B cell (primary cell): ENCODE measurements at regions of chr11 and their contacts with region 1.

Region 1: GRCh38 chr11:64846998-64847666 is 2.7 kb upstream of the CDC42BPG start:
- DNase-seq: peak; percentile 92
- ATAC-seq: peak; percentile 20
- H3K4me3 ChIP-seq: no peak overlapping the region
- H3K4me3 Mint-ChIP-seq: peak overlapping the region; percentile 63
- H3K27ac ChIP-seq: peak overlapping the region in 1 of 2 donors; percentile 25
- H3K27ac Mint-ChIP-seq: peak overlapping the region; percentile 75
- H3K4me1 ChIP-seq: peaks cover 53 to 69% of the 10 kb centered on the region in 2 donors
- H3K4me1 Mint-ChIP-seq: peaks cover 61% of the 10 kb centered on the region
- H3K27me3 ChIP-seq: no peaks in the 10 kb centered on the region
- H3K27me3 Mint-ChIP-seq: no peaks in the 10 kb centered on the region
- CTCF ChIP-seq: peak; percentile 97

Region 2: GRCh38 chr11:64742889-64743590 is 104.1 kb before region 1 on chr11:
- CTCF ChIA-PET with region 1: interaction called, 16 read pairs
- POLR2A ChIA-PET with region 1: interaction called, 8 read pairs
- intact Hi-C with region 1: loop called (anchors 10 kb)
- DNase-seq: peak; percentile 88
- ATAC-seq: peak; percentile 11
- H3K4me3 ChIP-seq: peak overlapping the region; percentile 48 to 99 (median 86)
- H3K4me3 Mint-ChIP-seq: peak overlapping the region; percentile 97
- H3K27ac ChIP-seq: peak overlapping the region; percentile 84 to 91
- H3K27ac Mint-ChIP-seq: peak overlapping the region; percentile 86
- H3K4me1 ChIP-seq: peaks cover 22 to 33% of the 10 kb centered on the region in 2 donors
- H3K4me1 Mint-ChIP-seq: peaks cover 49% of the 10 kb centered on the region
- H3K27me3 ChIP-seq: no peaks in the 10 kb centered on the region
- H3K27me3 Mint-ChIP-seq: no peaks in the 10 kb centered on the region
- CTCF ChIP-seq: peak; percentile 86

Region 3: DNA sequence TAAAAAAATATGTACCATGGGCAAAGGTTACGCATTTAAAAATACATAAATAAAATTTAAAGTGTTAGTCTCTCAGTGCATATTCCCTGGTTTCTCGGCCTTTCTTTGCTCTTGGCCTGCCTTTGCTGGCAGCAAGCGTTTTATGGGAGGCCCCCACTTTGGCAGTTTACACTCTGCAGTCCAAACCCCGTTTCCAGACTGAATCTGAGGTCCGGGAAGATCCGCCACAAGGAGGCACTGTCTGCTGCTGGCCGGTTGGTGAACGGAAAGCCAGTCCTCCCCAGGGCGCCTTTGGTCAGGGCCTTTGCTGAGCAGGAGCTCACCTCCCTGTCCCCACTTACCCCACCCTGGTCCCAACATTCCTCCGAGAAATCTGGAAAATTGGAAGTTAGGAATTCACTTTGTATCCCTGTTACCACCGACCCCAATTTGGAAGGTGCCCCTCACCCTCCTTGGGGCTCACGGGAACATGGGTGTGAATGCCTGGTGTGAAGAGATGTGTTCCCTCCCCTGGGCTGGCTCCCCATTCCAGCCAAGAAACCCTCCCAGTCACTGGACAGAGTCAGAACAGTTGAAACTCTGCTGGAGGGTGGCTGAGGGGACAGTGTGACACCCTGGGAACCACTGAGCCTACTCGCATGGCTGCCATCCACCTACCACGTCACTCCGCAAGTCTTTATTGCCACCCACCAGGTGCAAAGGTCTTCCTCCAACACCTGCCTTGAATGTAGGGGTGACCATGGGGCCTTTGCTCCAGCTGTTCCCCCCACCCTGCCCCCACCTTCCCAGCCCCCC is 59.4 kb before region 1 on chr11:
- CTCF ChIA-PET with region 1: interaction called, 20 read pairs
- POLR2A ChIA-PET with region 1: interaction called, 7 read pairs
- intact Hi-C with region 1: loop called (anchors 2 kb)
- DNase-seq: peak; percentile 73
- ATAC-seq: peak; percentile 83
- H3K4me3 ChIP-seq: no peak overlapping the region
- H3K4me3 Mint-ChIP-seq: no peak overlapping the region
- H3K27ac ChIP-seq: peak overlapping the region; percentile 25 to 56
- H3K27ac Mint-ChIP-seq: peak overlapping the region; percentile 81
- H3K4me1 ChIP-seq: peaks cover 12 to 14% of the 10 kb centered on the region in 2 donors
- H3K4me1 Mint-ChIP-seq: peaks cover 12% of the 10 kb centered on the region
- H3K27me3 ChIP-seq: no peaks in the 10 kb centered on the region
- H3K27me3 Mint-ChIP-seq: no peaks in the 10 kb centered on the region
- CTCF ChIP-seq: peak; percentile 77

Region 4: GRCh38 chr11:64864473-64865285 is 17.5 kb after region 1 on chr11:
- CTCF ChIA-PET with region 1: interaction called, 343 read pairs
- POLR2A ChIA-PET with region 1: interaction called, 150 read pairs
- intact Hi-C with region 1: loop called (anchors 1 kb)
- DNase-seq: peak; percentile 43
- ATAC-seq: no peak
- H3K4me3 ChIP-seq: peak overlapping the region in 3 of 5 experiments; percentile 25 to 40 (median 28)
- H3K4me3 Mint-ChIP-seq: peak overlapping the region; percentile 77
- H3K27ac ChIP-seq: peak overlapping the region; percentile 74 to 87
- H3K27ac Mint-ChIP-seq: peak overlapping the region; percentile 90
- H3K4me1 ChIP-seq: peaks cover 93 to 99% of the 10 kb centered on the region in 2 donors
- H3K4me1 Mint-ChIP-seq: peaks cover 90% of the 10 kb centered on the region
- H3K27me3 ChIP-seq: no peaks in the 10 kb centered on the region
- H3K27me3 Mint-ChIP-seq: no peaks in the 10 kb centered on the region
- CTCF ChIP-seq: no peak

Region 5: DNA sequence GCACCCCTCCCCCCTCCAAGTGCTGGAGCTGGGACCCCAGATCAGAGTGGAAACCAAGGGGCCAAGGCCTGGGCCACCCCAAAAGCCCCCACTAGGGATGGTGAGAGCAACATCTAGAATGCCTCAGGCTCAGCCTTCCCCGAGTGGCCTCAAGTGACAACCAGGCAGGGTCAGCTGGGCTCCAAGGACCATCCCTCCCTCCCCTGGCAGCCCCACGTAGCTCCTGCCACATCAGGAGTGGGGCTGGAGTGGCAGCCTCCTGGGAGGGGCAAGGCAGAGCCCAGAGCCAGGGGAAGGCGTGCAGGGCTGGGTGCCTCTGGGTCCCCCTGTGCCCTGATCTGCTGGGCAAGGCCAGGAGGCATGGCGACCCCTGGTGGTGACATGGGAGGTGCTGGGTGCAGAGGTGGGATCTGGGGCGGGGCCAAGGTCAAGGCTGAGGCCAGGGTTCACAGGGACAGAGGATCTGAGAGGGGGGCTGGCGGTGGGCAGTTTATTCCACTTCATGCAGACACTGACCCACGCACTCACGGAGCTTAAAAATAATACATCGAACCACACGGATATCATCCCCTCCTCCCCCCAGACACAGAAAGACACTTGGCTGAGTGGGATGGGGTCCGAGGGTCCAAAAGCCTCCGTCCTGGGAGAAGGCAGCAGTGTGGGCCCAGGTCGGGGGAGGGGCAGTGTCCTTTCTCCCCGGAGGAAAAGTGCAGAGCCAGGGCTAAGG is 47.1 kb after region 1 on chr11:
- CTCF ChIA-PET with region 1: interaction called, 1,254 read pairs
- POLR2A ChIA-PET with region 1: interaction called, 39 read pairs
- intact Hi-C with region 1: loop called (anchors 1 kb)
- DNase-seq: peak; percentile 91
- ATAC-seq: peak; percentile 98
- H3K4me3 ChIP-seq: no peak overlapping the region
- H3K4me3 Mint-ChIP-seq: no peak overlapping the region
- H3K27ac ChIP-seq: no peak overlapping the region
- H3K27ac Mint-ChIP-seq: peak overlapping the region; percentile 64
- H3K4me1 ChIP-seq: peaks cover 22 to 30% of the 10 kb centered on the region in 2 donors
- H3K4me1 Mint-ChIP-seq: peaks cover 16% of the 10 kb centered on the region
- H3K27me3 ChIP-seq: no peaks in the 10 kb centered on the region
- H3K27me3 Mint-ChIP-seq: no peaks in the 10 kb centered on the region
- CTCF ChIP-seq: peak; percentile 87

Region 6: GRCh38 chr11:65111744-65112414 is 264.7 kb after region 1 on chr11 and contains the start of gene TM7SF2:
- CTCF ChIA-PET with region 1: interaction called, 24 read pairs
- POLR2A ChIA-PET with region 1: interaction called, 5 read pairs
- intact Hi-C with region 1: loop called (anchors 2 kb)
- DNase-seq: peak; percentile 94
- ATAC-seq: peak; percentile 81
- H3K4me3 ChIP-seq: peak within 1 kb of the TSS; percentile 16 to 92 (median 68)
- H3K4me3 Mint-ChIP-seq: peak within 1 kb of the TSS; percentile 89
- H3K27ac ChIP-seq: peak within 1 kb of the TSS; percentile 44 to 54
- H3K27ac Mint-ChIP-seq: peak within 1 kb of the TSS; percentile 84
- H3K4me1 ChIP-seq: peaks cover 28 to 51% of the 10 kb centered on the region in 2 donors
- H3K4me1 Mint-ChIP-seq: peaks cover 51% of the 10 kb centered on the region
- H3K27me3 ChIP-seq: no peaks in the 10 kb centered on the region
- H3K27me3 Mint-ChIP-seq: no peaks in the 10 kb centered on the region
- CTCF ChIP-seq: no peak
- total RNA-seq, gene TM7SF2: 28.5 and 35.3 TPM in 2 replicates